Natural killer cell (primary cell): ENCODE measurements at regions of chr11 and their contacts with region 1.

Region 1: GRCh38 chr11:57800444-57801182 is 39.0 kb downstream of the CTNND1 start:
- DNase-seq: peak in 1 of 2 donors; percentile 82
- ATAC-seq: peak; percentile 87 to 98 (median 95)
- H3K4me3 ChIP-seq: no peak overlapping the region
- H3K4me3 Mint-ChIP-seq: no peak overlapping the region
- H3K27ac ChIP-seq: peak overlapping the region; percentile 37
- H3K27ac Mint-ChIP-seq: peak overlapping the region; percentile 70 to 81
- H3K4me1 ChIP-seq: peaks cover 3% of the 10 kb centered on the region
- H3K4me1 Mint-ChIP-seq: peaks cover 9 to 11% of the 10 kb centered on the region in 2 donors
- H3K27me3 ChIP-seq: no peaks in the 10 kb centered on the region
- H3K27me3 Mint-ChIP-seq: no peaks in the 10 kb centered on the region
- CTCF ChIP-seq: peak; percentile 86

Region 2: GRCh38 chr11:57345555-57346211 is 454.9 kb before region 1 on chr11:
- intact Hi-C with region 1: loop called (anchors 2 kb)
- DNase-seq: peak; percentile 57 to 88
- ATAC-seq: peak; percentile 69 to 87 (median 86)
- H3K4me3 ChIP-seq: no peak overlapping the region
- H3K4me3 Mint-ChIP-seq: no peak overlapping the region
- H3K27ac ChIP-seq: no peak overlapping the region
- H3K27ac Mint-ChIP-seq: no peak overlapping the region
- H3K4me1 ChIP-seq: peaks cover 17% of the 10 kb centered on the region
- H3K4me1 Mint-ChIP-seq: peaks cover 16 to 19% of the 10 kb centered on the region in 2 donors
- H3K27me3 ChIP-seq: no peaks in the 10 kb centered on the region
- H3K27me3 Mint-ChIP-seq: peaks cover 0 to under 1% of the 10 kb centered on the region in 2 donors
- CTCF ChIP-seq: peak; percentile 84

Region 3: DNA sequence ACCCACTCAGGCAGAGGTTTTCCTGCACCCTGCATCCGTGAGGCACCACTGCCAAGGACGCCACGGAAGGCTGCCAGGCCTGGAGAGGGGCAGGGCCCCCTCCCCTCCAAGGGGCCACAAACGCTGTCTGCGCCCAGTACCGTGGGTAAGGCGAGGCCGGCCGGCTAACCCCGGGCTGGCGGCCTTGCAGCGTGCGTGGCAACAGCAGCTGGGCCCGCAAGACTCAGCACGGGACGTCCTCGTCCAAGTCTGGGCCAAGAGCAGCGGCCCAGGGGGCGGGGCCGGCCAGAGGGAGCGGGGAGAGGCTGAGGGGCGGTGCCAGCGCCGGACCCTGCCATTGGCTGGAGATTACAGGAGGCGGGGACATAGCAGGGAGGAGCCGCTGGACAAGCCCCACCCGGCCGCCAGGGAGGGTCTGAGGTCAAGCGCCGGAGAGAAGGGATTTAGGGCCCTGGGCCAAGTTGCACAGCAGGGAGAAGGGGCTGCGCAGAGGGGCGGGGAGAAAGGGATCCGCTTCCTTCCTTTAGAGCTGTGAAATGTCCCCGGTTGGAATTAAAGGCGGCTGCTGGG is 301.1 kb before region 1 on chr11:
- intact Hi-C with region 1: loop called (anchors 10 kb)
- DNase-seq: peak in 1 of 2 donors; percentile 22
- ATAC-seq: peak; percentile 72 to 98 (median 88)
- H3K4me3 ChIP-seq: no peak overlapping the region
- H3K4me3 Mint-ChIP-seq: no peak overlapping the region
- H3K27ac ChIP-seq: no peak overlapping the region
- H3K27ac Mint-ChIP-seq: no peak overlapping the region
- H3K4me1 ChIP-seq: no peaks in the 10 kb centered on the region
- H3K4me1 Mint-ChIP-seq: peaks cover 0 to 7% of the 10 kb centered on the region in 2 donors
- H3K27me3 ChIP-seq: no peaks in the 10 kb centered on the region
- H3K27me3 Mint-ChIP-seq: no peaks in the 10 kb centered on the region
- CTCF ChIP-seq: no peak

Region 4: GRCh38 chr11:57712256-57713150 is 88.1 kb before region 1 on chr11 and contains the start of gene TMX2:
- intact Hi-C with region 1: loop called (anchors 2 kb)
- DNase-seq: peak; percentile 86 to 96
- ATAC-seq: peak; percentile 88 to 96 (median 89)
- H3K4me3 ChIP-seq: peak within 1 kb of the TSS; percentile 72
- H3K4me3 Mint-ChIP-seq: peak within 1 kb of the TSS; percentile 96
- H3K27ac ChIP-seq: peak within 1 kb of the TSS; percentile 73
- H3K27ac Mint-ChIP-seq: peak within 1 kb of the TSS; percentile 93 to 94
- H3K4me1 ChIP-seq: peaks cover 19% of the 10 kb centered on the region
- H3K4me1 Mint-ChIP-seq: peaks cover 36 to 41% of the 10 kb centered on the region in 2 donors
- H3K27me3 ChIP-seq: no peaks in the 10 kb centered on the region
- H3K27me3 Mint-ChIP-seq: no peaks in the 10 kb centered on the region
- CTCF ChIP-seq: no peak
- total RNA-seq, gene TMX2: 43.6 to 70.4 (median 45.7) TPM

Region 5: DNA sequence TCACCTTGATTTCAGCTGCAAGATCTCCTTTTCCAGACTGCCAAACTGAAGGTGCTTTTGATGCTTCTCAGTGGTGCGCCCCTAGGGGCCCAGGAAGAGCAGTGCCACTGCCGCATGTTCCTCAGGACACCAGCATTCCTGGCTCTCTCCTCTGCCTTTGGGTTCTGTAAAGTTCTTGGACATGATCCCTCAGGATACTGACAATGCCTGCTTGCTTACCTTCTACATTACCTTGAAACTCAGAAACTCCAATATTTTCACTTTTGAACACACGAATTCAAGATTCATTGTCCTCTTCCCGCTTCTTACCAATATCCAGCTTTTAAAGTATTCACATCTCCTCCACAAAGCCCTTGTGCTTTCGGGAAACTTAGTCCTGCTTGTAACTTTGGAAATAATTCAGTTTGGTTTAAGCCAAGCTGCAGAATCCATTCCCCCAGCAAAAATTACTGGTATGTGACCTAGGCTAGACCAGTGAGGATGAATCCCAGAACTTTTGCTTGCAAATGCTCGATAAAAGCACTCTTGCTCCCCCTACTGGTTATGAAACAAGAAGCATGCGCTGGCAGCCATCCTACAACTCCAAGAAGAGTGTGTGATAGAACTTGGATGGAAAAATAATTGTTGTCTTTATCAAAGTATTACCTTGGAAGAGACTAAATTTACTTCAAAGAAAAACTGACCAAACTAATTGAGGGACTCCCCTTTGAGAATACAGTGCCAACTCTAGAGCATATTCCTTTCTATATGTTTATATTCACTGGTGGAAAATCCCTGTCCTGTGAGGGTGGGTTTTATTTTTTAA is 723.8 kb after region 1 on chr11:
- intact Hi-C with region 1: loop called (anchors 1 kb)
- DNase-seq: peak; percentile 22 to 87
- ATAC-seq: peak; percentile 68 to 75 (median 70)
- H3K4me3 ChIP-seq: peak overlapping the region; percentile 7
- H3K4me3 Mint-ChIP-seq: peak overlapping the region; percentile 77
- H3K27ac ChIP-seq: peak overlapping the region; percentile 81
- H3K27ac Mint-ChIP-seq: peak overlapping the region; percentile 85 to 92
- H3K4me1 ChIP-seq: peaks cover 14% of the 10 kb centered on the region
- H3K4me1 Mint-ChIP-seq: peaks cover 22 to 30% of the 10 kb centered on the region in 2 donors
- H3K27me3 ChIP-seq: no peaks in the 10 kb centered on the region
- H3K27me3 Mint-ChIP-seq: no peaks in the 10 kb centered on the region
- CTCF ChIP-seq: peak; percentile 90